ENCODE measurements at regions of chr12 and their contacts with region 1.

Region 1: DNA sequence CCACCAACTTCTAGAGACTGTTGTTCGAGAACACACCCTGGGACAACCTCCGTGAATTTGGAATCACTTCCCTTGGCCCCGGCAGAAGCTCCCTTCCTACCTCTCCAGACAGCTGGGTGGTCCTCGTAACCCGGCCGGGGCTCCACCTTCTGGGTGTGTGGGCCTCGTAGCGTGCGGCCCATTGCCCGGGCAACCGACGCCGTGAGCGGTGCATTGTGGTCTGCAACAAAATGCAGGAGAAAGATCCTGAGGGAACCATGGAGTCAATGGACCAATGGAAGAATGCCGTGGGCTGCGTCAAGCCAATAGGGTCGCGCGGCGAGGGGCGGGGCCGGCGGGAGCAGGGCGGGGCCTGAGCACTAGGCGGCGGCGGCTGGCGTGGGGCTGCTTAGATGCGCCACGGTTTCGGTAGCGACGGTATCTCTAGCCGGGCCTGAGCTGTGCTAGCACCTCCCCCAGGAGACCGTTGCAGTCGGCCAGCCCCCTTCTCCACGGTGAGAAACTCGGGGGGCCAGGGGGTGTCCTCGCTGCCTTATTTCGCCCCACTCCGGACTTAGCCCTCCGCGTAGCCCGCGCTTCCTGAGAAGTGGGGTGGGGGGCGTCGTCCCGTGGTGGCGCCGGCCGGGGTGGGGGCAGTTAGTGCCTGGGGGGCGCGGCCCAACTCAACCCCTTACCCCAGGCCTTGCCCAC is at the start of gene DYNLL1:
- H3K4me3 Mint-ChIP-seq: peak within 1 kb of the TSS; percentile 93
- H3K27ac Mint-ChIP-seq: peak within 1 kb of the TSS; percentile 83
- H3K4me1 Mint-ChIP-seq: peaks cover 21% of the 10 kb centered on the region
- H3K27me3 Mint-ChIP-seq: no peaks in the 10 kb centered on the region

Region 2: DNA sequence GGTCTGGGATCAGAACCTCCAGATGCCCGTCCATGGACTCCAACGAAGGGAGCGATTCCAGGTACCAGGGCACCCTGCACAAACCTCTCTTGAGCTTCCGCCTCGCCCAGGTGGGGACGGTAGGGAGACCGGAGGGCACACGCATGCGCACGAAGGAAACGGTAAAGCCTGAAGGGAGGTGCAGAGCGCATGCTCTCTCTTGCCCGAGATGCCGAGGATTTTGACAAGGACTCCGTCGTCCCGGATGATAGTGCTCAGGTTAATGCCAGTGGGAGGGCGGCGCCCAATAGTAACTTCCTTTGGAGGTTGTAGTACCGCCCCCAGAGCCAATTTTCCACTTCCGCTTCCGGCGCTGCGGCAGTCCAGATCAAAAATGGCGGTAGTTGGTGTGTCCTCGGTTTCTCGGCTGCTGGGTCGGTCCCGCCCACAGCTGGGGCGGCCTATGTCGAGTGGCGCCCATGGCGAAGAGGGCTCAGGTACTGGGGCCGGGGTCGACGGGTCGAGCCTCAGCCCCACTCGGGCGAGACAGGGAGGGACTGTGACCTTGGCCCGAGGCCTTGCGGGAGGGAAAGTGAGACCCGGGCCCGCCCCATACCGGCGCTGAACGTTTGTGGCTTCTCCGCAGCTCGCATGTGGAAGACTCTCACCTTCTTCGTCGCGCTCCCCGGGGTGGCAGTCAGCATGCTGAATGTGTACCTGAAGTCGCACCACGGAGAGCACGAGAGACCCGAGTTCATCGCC is 57.9 kb before region 1 on chr12 and contains the start of gene COX6A1:
- intact Hi-C with region 1: loop called (anchors 2 kb)
- H3K4me3 Mint-ChIP-seq: peak within 1 kb of the TSS; percentile 98
- H3K27ac Mint-ChIP-seq: peak within 1 kb of the TSS; percentile 96
- H3K4me1 Mint-ChIP-seq: peaks cover 12% of the 10 kb centered on the region
- H3K27me3 Mint-ChIP-seq: peaks cover under 1% of the 10 kb centered on the region

Region 3: GRCh38 chr12:120469450-120470149 is 26.3 kb before region 1 on chr12 and contains the start of gene SRSF9:
- intact Hi-C with region 1: loop called (anchors 1 kb)
- H3K4me3 Mint-ChIP-seq: peak within 1 kb of the TSS; percentile 94
- H3K27ac Mint-ChIP-seq: peak within 1 kb of the TSS; percentile 89
- H3K4me1 Mint-ChIP-seq: peaks cover 61% of the 10 kb centered on the region
- H3K27me3 Mint-ChIP-seq: no peaks in the 10 kb centered on the region

Region 4: GRCh38 chr12:120528861-120529525 is 33.1 kb after region 1 on chr12 and contains the start of gene COQ5:
- intact Hi-C with region 1: loop called (anchors 1 kb)
- H3K4me3 Mint-ChIP-seq: peak within 1 kb of the TSS; percentile 100
- H3K27ac Mint-ChIP-seq: peak within 1 kb of the TSS; percentile 96
- H3K4me1 Mint-ChIP-seq: peaks cover 12% of the 10 kb centered on the region
- H3K27me3 Mint-ChIP-seq: no peaks in the 10 kb centered on the region

Region 5: GRCh38 chr12:120534203-120534702 is 38.4 kb after region 1 on chr12 and contains the start of gene RNF10:
- intact Hi-C with region 1: loop called (anchors 1 kb)
- H3K4me3 Mint-ChIP-seq: peak within 1 kb of the TSS; percentile 97
- H3K27ac Mint-ChIP-seq: peak within 1 kb of the TSS; percentile 96
- H3K4me1 Mint-ChIP-seq: peaks cover 38% of the 10 kb centered on the region
- H3K27me3 Mint-ChIP-seq: no peaks in the 10 kb centered on the region